ENCODE measurements at regions of chr3 and their contacts with region 1.

Region 1: DNA sequence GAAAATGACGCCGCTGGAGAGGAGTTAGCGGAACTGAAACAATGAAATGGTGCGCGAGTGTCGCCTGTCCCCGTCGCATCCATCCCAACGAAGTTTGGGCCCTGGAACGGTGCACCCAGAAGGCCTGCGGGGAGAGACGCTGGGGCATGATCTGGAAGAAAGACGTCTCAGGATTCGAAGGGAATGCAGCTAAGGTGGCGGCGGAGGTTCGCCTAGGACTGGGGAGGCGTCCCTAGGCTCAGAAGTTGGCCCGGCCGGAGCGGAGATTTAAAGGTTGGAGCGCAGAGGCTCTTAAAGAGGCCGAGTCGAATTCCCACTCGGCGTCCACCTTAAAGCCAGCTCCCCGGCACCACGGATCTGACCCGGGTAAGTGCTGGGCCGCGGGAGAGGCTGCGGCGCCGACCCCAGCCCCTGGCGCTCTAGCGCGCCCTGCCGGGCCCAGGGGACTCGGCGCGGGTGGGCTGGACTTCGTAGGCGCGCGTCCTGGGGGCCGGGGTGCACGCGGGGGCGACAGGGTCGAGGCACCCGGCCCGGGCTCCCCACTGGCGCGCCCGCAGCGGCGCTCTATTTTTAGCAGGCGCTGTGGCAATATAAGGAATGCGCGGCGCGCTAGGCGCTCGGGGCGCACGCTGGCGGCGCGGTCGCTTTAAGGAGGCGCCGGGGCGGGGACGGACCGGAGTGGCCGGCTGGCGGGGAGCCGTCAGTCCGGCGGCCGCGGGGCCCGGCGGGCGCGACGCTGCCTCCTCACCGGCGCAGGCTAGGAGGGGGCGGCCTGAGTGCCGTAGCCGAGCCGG is at the start of gene MRAS:
- DNase-seq: peak; percentile 86
- ATAC-seq: peak; percentile 63
- total RNA-seq, gene MRAS: 314 TPM

Region 2: GRCh38 chr3:138389841-138390586 is 41.9 kb after region 1 on chr3:
- intact Hi-C with region 1: loop called (anchors 10 kb)
- DNase-seq: no peak
- ATAC-seq: peak; percentile 73

Region 3: DNA sequence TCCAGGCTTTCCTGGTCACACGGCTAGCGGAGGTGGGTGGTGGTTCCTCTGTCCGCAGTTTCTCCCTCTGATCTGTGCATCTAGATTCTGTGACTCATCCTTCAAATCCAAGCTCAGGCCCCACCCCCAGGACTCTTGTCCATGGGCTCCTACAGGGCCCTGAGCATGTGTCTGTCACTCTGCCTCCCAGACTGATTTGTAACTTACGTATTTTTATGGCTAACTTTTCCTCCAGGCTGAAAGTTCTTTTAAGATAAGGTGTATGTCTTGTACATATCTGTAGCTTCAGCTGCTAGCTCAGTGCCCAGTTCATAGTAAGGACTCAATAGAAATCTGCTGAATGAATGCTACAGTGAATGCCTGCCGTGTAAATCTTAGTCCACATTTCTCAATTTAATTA is 94.3 kb after region 1 on chr3:
- intact Hi-C with region 1: no loop called
- DNase-seq: no peak
- ATAC-seq: no peak

Measured in sciatic nerve (tissue), 2 donors.